ENCODE measurements at regions of chr6 and their contacts with region 1.

Region 1: DNA sequence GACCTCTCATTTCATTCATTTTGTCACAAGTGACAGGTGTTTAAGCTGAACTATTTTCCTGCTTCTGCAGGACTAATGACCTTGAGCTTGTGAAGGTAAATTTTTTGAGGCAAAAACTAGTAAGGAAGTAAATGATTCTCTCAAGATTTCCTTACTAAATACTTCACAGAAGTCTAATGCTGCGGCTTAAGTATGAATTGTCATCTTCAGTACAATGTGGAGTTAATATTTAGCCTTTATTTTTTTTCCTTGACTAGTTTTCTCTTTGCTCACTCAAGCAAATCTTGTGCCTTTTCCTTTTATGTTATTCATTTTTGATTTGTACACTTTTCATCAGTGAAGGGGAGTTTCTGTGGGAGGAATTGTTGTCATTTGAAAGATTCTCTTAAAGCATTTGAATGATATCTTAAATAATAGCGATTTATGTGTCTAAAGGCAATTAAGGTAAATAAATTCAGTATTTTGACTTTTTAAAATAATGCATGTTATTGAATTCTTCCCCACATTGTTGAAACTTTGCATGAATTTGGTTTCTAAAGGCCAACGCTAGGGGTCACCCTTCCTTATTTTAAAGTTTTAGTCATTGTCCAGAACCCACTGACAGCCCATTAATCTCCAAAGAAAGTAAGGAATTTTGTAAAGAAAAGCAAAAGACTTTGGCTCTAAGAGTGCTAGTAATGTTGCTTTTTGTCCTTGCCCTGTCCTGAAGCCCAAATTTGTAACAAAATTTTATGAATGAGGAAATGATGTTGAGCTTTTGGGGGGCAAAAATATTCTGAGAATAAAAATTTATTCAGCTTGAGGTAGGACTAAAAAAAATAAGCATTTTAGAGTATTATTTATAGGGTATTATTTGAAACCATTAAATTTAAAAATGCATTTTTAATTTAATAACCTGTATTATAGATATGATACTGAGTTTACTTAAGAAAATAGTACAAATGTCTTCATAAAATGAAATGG is 157.4 kb upstream of the LAMA2 start:
- DNase-seq: peak; percentile 8
- CTCF ChIP-seq: peak; percentile 62

Region 2: GRCh38 chr6:128305228-128305627 is 420.3 kb before region 1 on chr6:
- CTCF ChIA-PET with region 1: no interaction called
- POLR2A ChIA-PET with region 1: no interaction called
- DNase-seq: no peak
- CTCF ChIP-seq: no peak

Region 3: GRCh38 chr6:128713461-128713860 is 12.1 kb before region 1 on chr6:
- CTCF ChIA-PET with region 1: interaction called, 12 read pairs
- POLR2A ChIA-PET with region 1: no interaction called
- DNase-seq: no peak
- CTCF ChIP-seq: no peak

Measured in GM10248 (cell line).